GM13976 (cell line): ENCODE measurements at regions of chr1 and their contacts with region 1.

Region 1: GRCh38 chr1:154404984-154405761 is at the start of gene IL6R:
- DNase-seq: peak; percentile 65
- CTCF ChIP-seq: peak; percentile 30

Region 2: GRCh38 chr1:154453574-154454352 is 48.6 kb after region 1 on chr1:
- in situ Hi-C with region 1: loop called (anchors 10 kb)
- DNase-seq: no peak
- CTCF ChIP-seq: no peak